ENCODE measurements at regions of chr22 and their contacts with region 1.

Region 1: DNA sequence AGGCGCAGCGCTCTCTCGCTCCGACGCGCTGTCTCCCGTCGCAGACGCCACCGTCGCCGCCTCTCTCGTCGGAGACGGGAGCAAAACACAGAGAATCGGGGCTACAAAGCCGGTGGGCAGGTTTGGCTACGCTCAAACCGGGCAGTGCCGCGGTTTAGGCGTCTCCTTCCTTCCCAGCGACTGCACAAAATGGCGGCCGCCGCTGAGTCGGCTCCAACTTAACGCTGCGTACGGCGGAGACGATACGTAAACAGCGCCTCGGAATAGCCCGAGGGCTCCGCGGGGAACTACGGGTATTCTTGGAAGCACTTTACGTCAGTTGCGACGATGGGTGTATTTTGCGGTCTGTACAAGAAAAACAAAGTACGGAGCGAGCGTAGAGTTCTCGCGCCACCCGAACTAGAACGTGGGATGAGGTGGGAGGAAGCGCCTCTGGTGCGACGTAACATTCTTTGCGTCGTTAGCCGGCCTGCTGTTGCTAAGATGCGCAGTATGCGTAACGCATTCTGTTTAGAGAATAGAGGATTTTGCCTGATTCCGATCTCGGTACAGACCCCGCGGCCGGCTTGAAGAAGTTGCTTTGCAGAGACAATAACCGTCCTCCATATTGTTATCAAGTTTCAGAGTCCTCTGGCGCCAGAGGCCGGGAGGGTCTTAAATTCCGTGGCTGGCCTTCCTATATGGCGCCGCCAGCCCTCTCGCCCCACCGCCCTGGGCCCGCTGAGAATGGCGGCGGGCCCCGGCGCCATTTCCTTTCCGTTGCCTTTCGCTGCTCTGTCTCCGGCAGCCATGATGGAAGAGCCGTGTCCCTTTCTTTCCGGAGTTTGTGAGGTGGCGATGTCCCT is at the start of gene DDX17:
- DNase-seq: peak; percentile 91 to 96
- ATAC-seq: peak; percentile 84 to 90 (median 87)
- H3K4me3 ChIP-seq: peak within 1 kb of the TSS; percentile 70 to 88 (median 80)
- H3K27ac ChIP-seq: peak within 1 kb of the TSS; percentile 97 to 100 (median 100)
- H3K4me1 ChIP-seq: peaks cover 2 to 45% (median 39%) of the 10 kb centered on the region in 9 donors
- H3K27me3 ChIP-seq: no peaks in the 10 kb centered on the region
- CTCF ChIP-seq: no peak
- total RNA-seq, gene DDX17: 156 to 236 (median 169) TPM

Region 2: GRCh38 chr22:38412435-38413084 is 93.8 kb before region 1 on chr22:
- intact Hi-C with region 1: loop called in 1 of 10 experiments (anchors 10 kb)
- DNase-seq: peak in 1 of 2 donors; percentile 45
- ATAC-seq: peak in 6 of 8 donors; percentile 31 to 54 (median 42)
- H3K4me3 ChIP-seq: peak overlapping the region in 9 of 10 donors; percentile 15 to 44 (median 37)
- H3K27ac ChIP-seq: peak overlapping the region in 8 of 10 donors; percentile 8 to 81 (median 68)
- H3K4me1 ChIP-seq: peaks cover 7 to 32% (median 15%) of the 10 kb centered on the region in 9 donors
- H3K27me3 ChIP-seq: peaks cover 0 to 6% (median 0%) of the 10 kb centered on the region in 7 donors
- CTCF ChIP-seq: peak; percentile 75 to 88 (median 85)

Region 3: GRCh38 chr22:38467904-38468758 is 38.2 kb before region 1 on chr22 and contains the start of gene KDELR3:
- intact Hi-C with region 1: loop called in 4 of 10 experiments (anchors 5 kb)
- DNase-seq: peak; percentile 70 to 72
- ATAC-seq: peak; percentile 72 to 95 (median 86)
- H3K4me3 ChIP-seq: peak within 1 kb of the TSS; percentile 49 to 84 (median 65)
- H3K27ac ChIP-seq: peak within 1 kb of the TSS in 9 of 10 donors; percentile 18 to 78 (median 73)
- H3K4me1 ChIP-seq: peaks cover 1 to 30% (median 23%) of the 10 kb centered on the region in 9 donors
- H3K27me3 ChIP-seq: peaks cover 0 to 58% (median 0%) of the 10 kb centered on the region in 7 donors
- CTCF ChIP-seq: peak in 5 of 9 donors; percentile 5 to 36 (median 9)
- total RNA-seq, gene KDELR3: 3.4 to 12.9 (median 7.9) TPM

Region 4: DNA sequence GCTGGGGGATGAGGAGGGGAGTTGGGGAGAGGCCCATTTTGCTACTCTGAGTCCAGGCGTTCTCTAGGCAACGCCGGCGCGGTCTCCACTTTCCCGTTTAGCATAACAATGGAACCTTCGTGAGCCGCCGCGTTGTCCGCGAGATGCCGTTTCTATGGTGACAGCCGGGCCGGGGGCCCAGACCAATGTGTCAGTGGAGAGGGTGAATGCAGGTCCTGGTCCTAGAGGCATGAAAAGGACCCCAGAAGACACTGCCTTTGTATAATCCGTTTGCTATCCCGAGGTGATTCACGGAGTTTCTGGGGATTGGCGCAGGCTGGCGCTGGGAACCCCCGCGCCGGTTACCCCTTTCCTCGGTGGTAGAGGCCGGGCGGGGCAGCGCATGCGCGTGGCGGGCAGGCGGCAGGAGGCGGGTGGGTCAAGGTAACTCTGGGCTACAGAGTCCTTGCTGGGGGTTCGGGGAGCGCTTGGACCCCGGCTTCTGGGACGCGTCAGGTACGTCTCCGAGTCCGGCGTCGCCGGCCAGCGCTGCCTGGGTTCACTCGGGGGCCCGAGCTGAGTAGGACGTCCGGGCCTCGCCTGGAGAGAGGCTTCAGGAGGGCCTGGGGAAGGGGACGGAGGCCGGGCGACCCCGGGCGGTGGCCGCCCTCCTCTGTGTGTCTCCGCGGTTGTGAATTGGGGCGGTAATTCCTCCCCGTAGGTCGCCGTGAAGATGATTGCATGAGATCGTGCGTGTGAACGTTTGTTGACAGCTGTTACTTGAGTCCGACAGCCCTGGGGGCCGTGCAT is 150.1 kb after region 1 on chr22 and contains the starts of genes CBY1 and FAM227A:
- intact Hi-C with region 1: loop called in 1 of 10 experiments (anchors 10 kb)
- DNase-seq: peak; percentile 88 to 90
- ATAC-seq: peak; percentile 95 to 98 (median 97)
- H3K4me3 ChIP-seq: peak within 1 kb of the TSS; percentile 66 to 98 (median 89)
- H3K27ac ChIP-seq: peak within 1 kb of the TSS; percentile 83 to 99 (median 96)
- H3K4me1 ChIP-seq: peaks cover 3 to 26% (median 19%) of the 10 kb centered on the region in 9 donors
- H3K27me3 ChIP-seq: no peaks in the 10 kb centered on the region
- CTCF ChIP-seq: peak in 3 of 9 donors; percentile 8 to 16 (median 16)
- total RNA-seq, gene CBY1: 33.8 to 51.0 (median 40.5) TPM
- total RNA-seq, gene FAM227A: 0.11 to 0.97 (median 0.46) TPM

Region 5: DNA sequence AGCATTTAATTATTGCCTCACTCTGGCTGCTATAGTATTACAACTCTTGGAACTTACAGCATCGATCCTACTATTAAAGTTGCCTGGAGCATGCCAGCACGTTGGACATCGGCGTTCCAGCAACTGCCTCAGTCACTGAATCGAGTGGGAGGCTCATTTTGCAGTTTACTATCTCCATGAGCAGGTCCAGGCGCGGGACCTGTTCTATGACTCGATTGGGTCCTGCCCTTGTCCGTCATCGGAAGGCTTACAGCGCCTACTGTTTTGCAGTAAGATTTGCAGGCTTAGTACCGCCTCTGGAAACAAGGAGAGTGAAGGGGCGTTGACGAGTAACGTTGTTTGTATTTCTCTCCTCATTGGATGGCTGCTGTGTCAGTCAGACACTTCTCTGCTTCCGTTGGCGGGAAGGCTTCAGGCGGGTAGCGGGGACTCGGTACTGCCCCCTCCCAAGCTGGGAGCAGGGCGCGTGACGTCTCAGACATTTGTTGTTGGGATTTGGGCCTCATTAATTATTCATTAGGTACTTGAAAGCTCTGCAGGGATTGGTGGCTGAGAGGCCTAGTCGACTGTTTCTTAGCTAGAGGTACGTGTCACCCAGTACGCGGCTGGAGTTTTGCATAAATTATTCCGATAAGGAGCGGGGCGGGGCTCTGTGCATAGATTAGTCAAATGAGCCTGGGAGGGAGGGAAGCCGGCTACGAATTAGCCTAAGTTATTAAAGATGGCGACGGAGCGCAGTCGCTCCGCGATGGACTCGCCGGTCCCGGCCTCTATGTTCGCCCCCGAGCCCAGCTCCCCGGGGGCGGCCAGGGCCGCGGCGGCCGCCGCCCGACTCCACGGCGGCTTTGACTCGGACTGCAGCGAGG is 199.1 kb after region 1 on chr22 and contains the start of gene GTPBP1:
- intact Hi-C with region 1: loop called in 1 of 10 experiments (anchors 10 kb)
- DNase-seq: peak; percentile 95 to 100
- ATAC-seq: peak; percentile 87 to 95 (median 94)
- H3K4me3 ChIP-seq: peak within 1 kb of the TSS; percentile 74 to 98 (median 88)
- H3K27ac ChIP-seq: peak within 1 kb of the TSS; percentile 86 to 98 (median 95)
- H3K4me1 ChIP-seq: peaks cover 12 to 55% (median 51%) of the 10 kb centered on the region in 9 donors
- H3K27me3 ChIP-seq: no peaks in the 10 kb centered on the region
- CTCF ChIP-seq: peak in 2 of 9 donors; percentile 28 to 35
- total RNA-seq, gene GTPBP1: 23.0 to 53.2 (median 34.2) TPM